ENCODE measurements at regions of chr21 and their contacts with region 1.

Region 1: GRCh38 chr21:38355992-38356797 is 99.4 kb downstream of the KCNJ15 start:
- DNase-seq: peak; percentile 34 to 93
- H3K4me3 ChIP-seq: no peak overlapping the region
- H3K27ac ChIP-seq: no peak overlapping the region
- H3K4me1 ChIP-seq: peaks cover 0 to 11% (median 4%) of the 10 kb centered on the region in 4 experiments; a peak in 3 of 7 replicates
- H3K27me3 ChIP-seq: peaks cover 0 to 1% (median 0%) of the 10 kb centered on the region in 4 experiments; a peak in 3 of 7 replicates
- CTCF ChIP-seq: peak; percentile 91 to 98 (median 94)
- EP300 ChIP-seq: no peak
- POLR2A ChIP-seq: no peak
- RAD21 ChIP-seq: peak; percentile 99

Region 2: GRCh38 chr21:38170280-38170679 is 185.9 kb before region 1 on chr21:
- CTCF ChIA-PET with region 1: interaction called, 366 read pairs
- POLR2A ChIA-PET with region 1: interaction called, 7 read pairs
- DNase-seq: peak; percentile 15 to 53
- H3K4me3 ChIP-seq: no peak overlapping the region
- H3K27ac ChIP-seq: no peak overlapping the region
- H3K4me1 ChIP-seq: peaks cover 2 to 10% (median 6%) of the 10 kb centered on the region in 4 experiments; a peak in 5 of 7 replicates
- H3K27me3 ChIP-seq: no peaks in the 10 kb centered on the region; a peak in 1 of 7 replicates
- CTCF ChIP-seq: peak; percentile 68 to 87 (median 75)
- EP300 ChIP-seq: no peak
- POLR2A ChIP-seq: no peak
- RAD21 ChIP-seq: peak; percentile 92 to 95

Region 3: GRCh38 chr21:38219049-38219628 is 137.1 kb before region 1 on chr21:
- CTCF ChIA-PET with region 1: interaction called, 59 read pairs
- POLR2A ChIA-PET with region 1: no interaction called
- DNase-seq: peak; percentile 10 to 87
- H3K4me3 ChIP-seq: no peak overlapping the region
- H3K27ac ChIP-seq: no peak overlapping the region
- H3K4me1 ChIP-seq: no peaks in the 10 kb centered on the region
- H3K27me3 ChIP-seq: no peaks in the 10 kb centered on the region
- CTCF ChIP-seq: peak; percentile 83 to 88 (median 85)
- EP300 ChIP-seq: no peak
- POLR2A ChIP-seq: no peak
- RAD21 ChIP-seq: peak; percentile 73 to 88

Region 4: DNA sequence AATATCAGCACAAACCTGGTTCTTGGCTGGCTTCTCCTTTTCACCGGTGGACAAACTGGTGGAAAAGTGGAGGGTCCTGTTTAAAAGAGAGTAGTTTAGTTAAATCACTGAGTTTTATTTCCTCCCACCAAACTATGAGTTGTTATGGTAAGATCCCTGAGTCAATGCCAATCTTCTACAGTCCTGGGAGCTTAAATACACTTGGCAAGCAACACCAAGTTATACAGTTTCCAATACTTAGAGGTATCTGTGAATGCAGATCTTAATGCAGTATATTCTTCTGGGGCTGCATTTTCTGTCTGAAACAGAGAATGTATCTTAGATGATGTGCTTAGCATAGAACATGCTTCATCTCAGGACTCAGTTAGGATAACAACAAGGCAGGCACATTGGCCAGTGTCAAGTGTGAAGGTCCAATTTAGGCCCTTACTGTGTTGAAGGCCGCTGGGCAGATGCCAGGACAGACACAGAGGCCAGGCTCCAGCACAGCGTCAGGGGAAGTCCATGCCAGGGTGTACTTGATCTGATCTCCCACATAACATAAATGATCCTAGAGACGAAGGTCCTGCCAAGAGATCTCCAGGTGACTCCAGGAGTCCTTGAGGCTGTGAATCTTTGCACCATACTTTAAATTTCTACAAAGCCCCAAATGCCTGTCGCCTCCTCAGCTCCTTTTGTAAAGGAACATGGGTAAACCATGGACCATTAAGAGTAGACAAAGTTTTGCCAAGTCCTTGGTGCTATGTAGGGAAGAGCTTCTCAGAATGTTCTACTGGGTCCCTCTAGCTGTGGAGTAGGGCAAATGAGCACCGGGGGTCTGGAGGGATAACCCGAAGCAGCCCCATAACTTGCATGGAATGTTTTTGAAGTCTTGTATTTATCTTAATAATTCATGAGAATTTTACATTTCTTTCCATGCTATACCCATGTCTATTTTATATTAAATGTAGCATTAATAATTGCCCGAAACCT is 22.6 kb before region 1 on chr21:
- CTCF ChIA-PET with region 1: interaction called, 13 read pairs
- POLR2A ChIA-PET with region 1: no interaction called
- DNase-seq: no peak
- H3K4me3 ChIP-seq: no peak overlapping the region
- H3K27ac ChIP-seq: no peak overlapping the region
- H3K4me1 ChIP-seq: no peaks in the 10 kb centered on the region
- H3K27me3 ChIP-seq: no peaks in the 10 kb centered on the region
- CTCF ChIP-seq: peak; percentile 44 to 53 (median 47); a peak in 3 of 4 replicates
- EP300 ChIP-seq: no peak
- POLR2A ChIP-seq: no peak
- RAD21 ChIP-seq: peak; percentile 67 to 81

Region 5: GRCh38 chr21:38367646-38368045 is 11.5 kb after region 1 on chr21:
- CTCF ChIA-PET with region 1: interaction called, 10 read pairs
- POLR2A ChIA-PET with region 1: no interaction called
- DNase-seq: no peak
- H3K4me3 ChIP-seq: no peak overlapping the region
- H3K27ac ChIP-seq: no peak overlapping the region
- H3K4me1 ChIP-seq: no peaks in the 10 kb centered on the region
- H3K27me3 ChIP-seq: no peaks in the 10 kb centered on the region
- CTCF ChIP-seq: no peak
- EP300 ChIP-seq: no peak
- POLR2A ChIP-seq: no peak
- RAD21 ChIP-seq: no peak

Measured in H1 (cell line).